ENCODE measurements at regions of chrX and their contacts with region 1.

Region 1: GRCh38 chrX:16931371-16931770 is 15.1 kb upstream of the REPS2 start:
- DNase-seq: no peak
- H3K4me3 ChIP-seq: no peak overlapping the region
- H3K27ac ChIP-seq: no peak overlapping the region
- H3K4me1 ChIP-seq: no peaks in the 10 kb centered on the region
- H3K27me3 ChIP-seq: no peaks in the 10 kb centered on the region
- CTCF ChIP-seq: no peak
- POLR2A ChIP-seq: no peak

Region 2: DNA sequence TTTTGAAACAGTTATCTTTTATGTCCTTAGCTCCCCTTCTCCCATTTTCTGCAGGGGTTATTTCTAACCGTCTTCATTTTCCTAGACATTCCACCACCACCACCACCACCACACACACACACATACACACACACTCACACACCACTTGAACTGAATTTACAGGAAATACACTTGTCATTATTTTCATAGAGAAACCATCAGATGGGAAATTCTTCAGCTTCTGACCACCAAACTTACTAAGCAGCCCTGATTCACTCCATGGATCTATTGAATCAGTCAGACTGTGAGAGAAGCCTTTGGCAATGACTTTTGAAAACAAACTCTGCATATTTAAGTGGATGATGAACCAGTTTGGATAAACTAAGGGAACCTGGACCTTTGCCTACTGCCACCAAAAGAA is 233.6 kb after region 1 on chrX:
- intact Hi-C with region 1: loop called (anchors 5 kb)
- DNase-seq: no peak
- H3K4me3 ChIP-seq: no peak overlapping the region
- H3K27ac ChIP-seq: no peak overlapping the region
- H3K4me1 ChIP-seq: no peaks in the 10 kb centered on the region
- H3K27me3 ChIP-seq: no peaks in the 10 kb centered on the region
- CTCF ChIP-seq: no peak
- POLR2A ChIP-seq: no peak

Measured in vagina (tissue), 2 donors.